HEK293T (cell line): ENCODE measurements at regions of chr1 and their contacts with region 1.

Region 1: GRCh38 chr1:182604169-182605164 is at the start of gene RGS16:
- DNase-seq: peak; percentile 96

Region 2: GRCh38 chr1:182614796-182615454 is 10.5 kb after region 1 on chr1:
- CTCF ChIA-PET with region 1: interaction called, 3 read pairs
- POLR2A ChIA-PET with region 1: interaction called, 64 read pairs
- DNase-seq: peak; percentile 67

Region 3: DNA sequence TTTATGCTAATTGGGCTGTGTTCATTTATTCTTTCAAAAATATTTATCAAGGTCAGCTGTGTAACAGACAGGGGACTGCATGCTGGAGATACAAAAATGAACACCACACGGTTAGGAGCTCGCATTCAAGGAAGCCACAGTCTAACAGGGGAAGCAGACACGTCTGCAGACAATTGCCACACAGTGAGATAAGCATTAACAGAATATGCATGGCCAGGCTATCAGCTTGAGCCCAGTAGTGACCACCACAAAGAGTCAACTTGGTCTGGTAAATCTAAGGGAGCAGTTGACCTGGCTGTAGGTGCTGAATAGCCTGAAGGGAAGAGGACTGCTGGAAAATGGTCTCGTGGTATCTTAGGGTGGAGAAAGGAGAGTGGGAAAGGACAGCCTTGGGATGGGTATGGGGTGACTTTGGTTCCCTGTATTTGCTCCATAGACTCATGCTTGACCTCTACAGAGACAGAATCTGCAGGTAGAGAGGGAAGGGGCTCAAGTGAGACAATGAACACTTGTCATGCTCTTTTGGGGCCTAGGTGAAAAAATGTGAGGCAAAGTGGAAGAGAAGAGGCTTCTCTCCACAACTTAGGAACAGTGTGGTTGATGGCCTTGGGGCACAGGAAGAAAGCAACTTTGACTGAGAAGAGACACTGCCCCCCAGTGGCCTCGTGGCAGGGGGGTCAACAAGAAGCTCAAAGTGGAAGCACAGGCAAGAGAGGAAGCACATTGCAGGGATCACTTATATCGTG is 177.5 kb after region 1 on chr1:
- CTCF ChIA-PET with region 1: interaction called, 324 read pairs
- POLR2A ChIA-PET with region 1: interaction called, 20 read pairs
- DNase-seq: peak; percentile 75

Region 4: DNA sequence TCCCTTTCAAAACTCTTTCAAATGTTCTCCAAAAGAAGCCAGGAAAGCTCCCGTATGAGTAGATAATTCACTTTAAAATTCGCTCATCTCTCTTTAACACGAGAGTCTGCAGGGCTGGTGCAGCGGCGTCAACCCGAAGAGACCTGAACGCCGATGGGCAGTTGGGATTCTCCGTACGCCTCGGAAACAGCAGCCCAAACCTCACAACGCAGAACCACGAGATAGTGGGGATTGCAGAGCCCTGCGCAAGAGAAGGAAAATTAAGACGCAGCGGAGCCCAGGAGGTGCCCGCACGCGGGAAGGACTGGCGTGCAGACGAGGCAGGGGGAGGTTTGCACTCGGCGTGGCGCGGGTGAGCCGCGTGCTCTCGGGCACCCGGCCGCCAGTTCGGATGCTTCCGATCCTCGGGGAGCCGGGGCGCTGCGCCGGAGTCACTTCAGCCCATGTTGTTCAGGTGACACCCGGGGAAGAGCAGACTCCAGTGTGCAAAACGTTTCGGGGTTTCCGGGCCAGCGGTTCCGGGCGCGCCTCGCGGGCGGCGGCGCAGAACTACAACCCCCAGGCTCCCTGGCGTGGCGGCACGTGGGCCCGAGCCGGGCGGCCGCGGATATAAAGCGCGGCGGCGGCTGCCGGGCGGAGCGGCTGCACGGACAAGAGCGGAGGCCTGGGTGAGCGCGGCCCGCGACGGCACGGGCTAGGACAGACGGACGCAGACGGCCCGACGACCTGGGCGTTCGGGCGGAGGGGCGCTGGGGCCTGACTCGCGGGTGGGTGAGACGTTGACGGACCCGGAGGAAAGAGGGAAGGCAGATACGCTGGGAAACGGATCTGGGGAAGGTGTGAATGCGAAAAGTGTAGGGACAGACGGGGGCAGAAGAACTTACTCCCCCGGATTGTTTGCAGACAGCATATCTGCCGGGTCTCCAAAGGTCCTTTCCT is 184.9 kb after region 1 on chr1 and contains the start of gene NPL:
- CTCF ChIA-PET with region 1: interaction called, 324 read pairs
- POLR2A ChIA-PET with region 1: interaction called, 20 read pairs
- DNase-seq: peak; percentile 84